ENCODE measurements at regions of chr6 and their contacts with region 1.

Region 1: GRCh38 chr6:6724539-6725467 is 136.3 kb downstream of the LY86 start:
- DNase-seq: peak; percentile 76 to 92 (median 85)
- ATAC-seq: peak; percentile 78
- H3K4me3 ChIP-seq: no peak overlapping the region
- H3K4me1 ChIP-seq: peaks cover 33% of the 10 kb centered on the region
- CTCF ChIP-seq: peak; percentile 54

Region 2: GRCh38 chr6:6676910-6677441 is 47.8 kb before region 1 on chr6:
- intact Hi-C with region 1: loop called in 1 of 2 experiments (anchors 5 kb)
- DNase-seq: peak in 2 of 3 donors; percentile 88 to 95
- ATAC-seq: peak; percentile 85
- H3K4me3 ChIP-seq: no peak overlapping the region
- H3K4me1 ChIP-seq: peaks cover 21% of the 10 kb centered on the region
- CTCF ChIP-seq: peak; percentile 87

Region 3: GRCh38 chr6:6758915-6759654 is 34.3 kb after region 1 on chr6:
- intact Hi-C with region 1: no loop called
- DNase-seq: peak; percentile 57 to 71 (median 61)
- ATAC-seq: peak; percentile 85
- H3K4me3 ChIP-seq: no peak overlapping the region
- H3K4me1 ChIP-seq: peaks cover 12% of the 10 kb centered on the region
- CTCF ChIP-seq: no peak

Region 4: GRCh38 chr6:7243179-7243981 is 518.6 kb after region 1 on chr6:
- intact Hi-C with region 1: loop called (anchors 2 to 5 kb)
- DNase-seq: peak in 1 of 3 donors; percentile 69
- ATAC-seq: peak; percentile 59
- H3K4me3 ChIP-seq: no peak overlapping the region
- H3K4me1 ChIP-seq: peaks cover 30% of the 10 kb centered on the region
- CTCF ChIP-seq: peak; percentile 77